ENCODE measurements at regions of chrX and their contacts with region 1.

Region 1: GRCh38 chrX:17944833-17945497 is 83.9 kb upstream of the RAI2 start:
- DNase-seq: peak; percentile 15
- H3K4me3 ChIP-seq: no peak overlapping the region
- H3K27ac ChIP-seq: no peak overlapping the region
- H3K4me1 ChIP-seq: no peaks in the 10 kb centered on the region
- H3K27me3 ChIP-seq: no peaks in the 10 kb centered on the region; the same call in 1 of the 2 replicates
- CTCF ChIP-seq: peak; percentile 67
- EP300 ChIP-seq: no peak
- RAD21 ChIP-seq: peak; percentile 52

Region 2: GRCh38 chrX:17967888-17968287 is 22.9 kb after region 1 on chrX:
- CTCF ChIA-PET with region 1: interaction called, 10 read pairs
- POLR2A ChIA-PET with region 1: no interaction called
- DNase-seq: no peak
- H3K4me3 ChIP-seq: no peak overlapping the region
- H3K27ac ChIP-seq: no peak overlapping the region
- H3K4me1 ChIP-seq: no peaks in the 10 kb centered on the region
- H3K27me3 ChIP-seq: no peaks in the 10 kb centered on the region
- CTCF ChIP-seq: no peak
- EP300 ChIP-seq: no peak
- RAD21 ChIP-seq: no peak

Region 3: GRCh38 chrX:18210470-18210869 is 265.5 kb after region 1 on chrX:
- CTCF ChIA-PET with region 1: interaction called, 12 read pairs
- POLR2A ChIA-PET with region 1: no interaction called
- DNase-seq: no peak
- H3K4me3 ChIP-seq: no peak overlapping the region
- H3K27ac ChIP-seq: no peak overlapping the region
- H3K4me1 ChIP-seq: no peaks in the 10 kb centered on the region
- H3K27me3 ChIP-seq: no peaks in the 10 kb centered on the region
- CTCF ChIP-seq: peak; percentile 47
- EP300 ChIP-seq: no peak
- RAD21 ChIP-seq: peak; percentile 64

Measured in SK-N-SH (cell line).